AG04449 (cell line): ENCODE measurements at regions of chr6 and their contacts with region 1.

Region 1: GRCh38 chr6:3742426-3743344 is 8.8 kb downstream of the PXDC1 start:
- DNase-seq: no peak
- H3K4me3 ChIP-seq: 0 out of 2 replicates have a peak overlapping the region, but pooled peaks have one; percentile 25
- CTCF ChIP-seq: peak; percentile 87

Region 2: GRCh38 chr6:3281631-3282475 is 460.8 kb before region 1 on chr6:
- CTCF ChIA-PET with region 1: interaction called, 12 read pairs
- POLR2A ChIA-PET with region 1: interaction called, 3 read pairs
- DNase-seq: peak; percentile 37
- H3K4me3 ChIP-seq: no peak overlapping the region
- CTCF ChIP-seq: no peak

Region 3: DNA sequence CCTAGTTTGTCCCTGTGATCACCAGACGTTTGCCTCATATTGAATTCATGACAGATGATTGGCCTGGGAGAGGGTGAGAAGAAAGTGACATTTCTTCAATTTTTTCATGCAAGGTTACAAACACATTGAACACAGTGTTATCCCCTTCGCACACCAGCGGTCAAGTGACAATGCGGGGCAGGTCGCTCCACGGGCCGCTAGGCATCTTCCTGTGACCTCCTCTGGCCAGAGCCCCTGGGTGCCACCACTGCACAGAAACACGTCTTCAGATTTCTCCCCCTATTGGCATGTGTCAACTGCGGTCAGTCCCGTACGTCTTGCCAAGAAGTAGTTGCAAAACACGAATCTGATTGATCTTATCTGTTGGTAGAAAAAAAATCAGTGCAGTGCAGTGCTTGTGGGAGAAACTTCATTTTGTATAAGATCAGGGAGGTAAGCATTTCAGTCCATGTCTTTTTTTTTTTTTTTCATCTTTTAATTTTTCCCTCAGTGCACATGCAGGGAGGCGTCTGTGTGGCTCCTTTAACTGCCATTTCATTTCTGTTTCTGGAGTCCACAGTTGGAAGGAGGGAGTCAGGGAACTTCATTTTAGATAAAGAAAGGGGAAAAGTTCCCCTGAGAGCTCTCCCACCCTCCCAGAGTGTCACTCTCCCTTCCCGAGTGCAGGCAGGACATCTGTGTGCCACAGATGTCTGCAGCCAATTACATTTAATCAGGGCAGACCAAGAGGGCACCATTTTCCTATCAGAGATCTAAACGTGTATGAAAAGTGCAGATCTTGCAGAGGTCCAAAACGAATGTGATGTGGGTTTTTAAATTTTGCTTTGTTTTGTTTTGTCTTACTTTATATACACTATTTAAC is 88.0 kb before region 1 on chr6:
- CTCF ChIA-PET with region 1: no interaction called
- POLR2A ChIA-PET with region 1: no interaction called
- DNase-seq: no peak
- H3K4me3 ChIP-seq: no peak overlapping the region
- CTCF ChIP-seq: no peak

Region 4: DNA sequence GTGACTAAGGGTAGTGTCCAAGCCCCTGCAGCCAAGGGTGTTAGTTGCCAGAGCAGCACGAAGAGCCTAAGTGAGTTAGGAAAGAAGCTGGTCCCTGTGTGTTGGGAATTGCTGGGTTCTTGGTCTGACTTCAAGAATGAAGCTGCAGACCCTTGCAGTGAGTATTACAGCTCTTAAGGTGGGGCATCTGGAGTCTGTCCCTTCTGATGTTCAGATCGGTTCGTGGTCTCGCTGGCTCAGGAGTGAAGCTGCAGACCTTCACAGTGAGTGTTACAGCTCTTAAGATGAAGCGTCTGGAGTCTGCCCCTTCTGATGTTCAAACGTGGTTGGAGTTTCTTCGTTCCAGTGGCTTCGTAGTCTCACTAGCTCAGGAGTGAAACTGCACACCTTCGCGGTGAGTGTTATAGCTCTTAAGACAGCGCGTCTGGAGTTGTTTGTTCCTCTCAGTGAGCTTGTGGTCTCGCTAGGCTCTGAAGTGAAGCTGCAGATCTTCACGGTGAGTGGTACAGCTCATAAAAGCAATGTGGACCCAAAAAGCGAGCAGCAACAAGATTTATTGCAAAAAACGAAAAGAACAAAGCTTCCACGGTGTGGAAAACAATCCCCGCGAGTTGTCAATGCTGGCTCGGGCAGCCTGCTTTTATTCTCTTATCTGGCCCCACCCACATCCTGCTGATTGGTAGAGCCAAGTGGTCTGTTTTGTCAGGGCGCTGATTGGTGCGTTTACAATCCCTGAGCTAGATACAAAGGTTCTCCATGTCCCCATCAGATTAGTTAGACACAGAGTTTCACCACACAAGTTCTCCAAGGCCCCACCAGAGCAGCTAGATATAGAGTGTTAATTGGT is 23.0 kb before region 1 on chr6:
- CTCF ChIA-PET with region 1: no interaction called
- POLR2A ChIA-PET with region 1: no interaction called
- DNase-seq: no peak
- H3K4me3 ChIP-seq: no peak overlapping the region
- CTCF ChIP-seq: no peak

Region 5: GRCh38 chr6:3841711-3842565 is 99.3 kb after region 1 on chr6:
- CTCF ChIA-PET with region 1: interaction called, 77 read pairs
- POLR2A ChIA-PET with region 1: interaction called, 27 read pairs
- DNase-seq: peak; percentile 67
- H3K4me3 ChIP-seq: no peak overlapping the region
- CTCF ChIP-seq: no peak

Region 6: DNA sequence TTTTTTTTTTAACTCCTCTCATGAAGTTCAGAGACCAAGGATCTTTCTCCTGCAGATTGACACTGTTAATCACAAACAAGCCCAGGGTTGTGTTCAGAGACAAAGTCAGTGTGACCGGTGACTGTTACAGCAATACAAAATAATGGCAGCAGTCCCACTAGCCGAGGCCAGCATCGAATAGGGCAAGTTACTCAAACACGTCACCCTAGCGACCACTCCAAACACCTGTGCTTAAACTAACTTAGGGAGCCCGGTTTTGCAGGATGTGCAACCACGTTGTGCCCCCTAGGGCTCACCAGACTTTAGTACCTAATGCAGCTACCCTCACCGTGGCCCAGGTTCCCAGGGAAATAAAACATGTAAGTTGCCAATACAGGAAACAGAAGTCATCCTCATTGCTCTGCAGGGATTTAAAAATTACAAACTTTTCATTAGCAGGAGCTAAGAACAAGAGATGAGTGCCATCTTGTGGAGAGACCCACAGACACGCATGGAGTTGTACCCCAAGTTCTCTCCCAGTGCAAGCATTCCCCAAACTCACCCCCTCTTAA is 144.5 kb after region 1 on chr6:
- CTCF ChIA-PET with region 1: interaction called, 267 read pairs
- POLR2A ChIA-PET with region 1: interaction called, 13 read pairs
- DNase-seq: no peak
- H3K4me3 ChIP-seq: no peak overlapping the region
- CTCF ChIP-seq: peak; percentile 55

Region 7: DNA sequence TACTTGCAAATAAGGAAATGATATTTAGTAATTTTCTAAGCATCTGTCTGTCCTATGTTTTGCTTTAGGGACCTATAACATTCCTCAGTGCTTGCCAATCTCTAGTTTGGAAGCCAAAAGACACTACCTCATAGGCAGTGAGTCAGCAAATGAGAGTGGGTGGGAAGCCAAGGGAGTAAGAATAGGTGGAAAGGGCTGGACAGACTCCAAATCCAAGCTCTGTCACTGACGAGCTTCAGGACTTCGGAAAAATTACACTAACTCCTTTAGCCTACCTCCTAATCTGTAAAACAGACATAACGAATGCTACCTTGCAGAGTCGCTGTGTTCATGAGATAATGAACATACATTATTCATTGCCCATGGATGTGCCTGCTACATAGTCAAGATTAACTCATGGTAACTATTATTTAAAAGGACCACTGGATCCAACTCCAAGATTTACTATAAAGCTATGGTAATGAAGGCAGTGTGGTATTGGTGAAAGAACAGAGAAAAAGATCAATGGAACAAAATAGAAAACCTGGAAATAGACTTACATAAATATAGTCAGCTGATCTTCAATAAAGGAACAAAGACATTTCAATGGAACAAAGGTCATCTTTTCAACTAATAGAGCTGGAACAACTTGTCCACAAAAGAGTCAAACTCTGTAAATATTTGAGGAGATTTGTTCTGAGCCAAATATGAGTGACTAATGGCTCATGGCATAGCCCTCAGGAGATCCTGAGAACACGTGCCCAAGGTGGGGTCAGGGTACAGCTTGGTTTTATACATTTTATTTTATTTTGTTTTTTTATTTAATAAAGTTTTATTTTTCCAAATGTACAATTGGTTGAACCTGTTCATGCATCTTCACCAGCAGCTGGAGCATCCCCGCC is 170.6 kb after region 1 on chr6:
- CTCF ChIA-PET with region 1: interaction called, 12 read pairs
- POLR2A ChIA-PET with region 1: no interaction called
- DNase-seq: peak; percentile 97
- H3K4me3 ChIP-seq: no peak overlapping the region
- CTCF ChIP-seq: no peak

Region 8: GRCh38 chr6:3929281-3929798 is 186.7 kb after region 1 on chr6:
- CTCF ChIA-PET with region 1: interaction called, 38 read pairs
- POLR2A ChIA-PET with region 1: no interaction called
- DNase-seq: peak; percentile 96
- H3K4me3 ChIP-seq: no peak overlapping the region
- CTCF ChIP-seq: no peak

Region 9: GRCh38 chr6:3990692-3991501 is 248.2 kb after region 1 on chr6:
- CTCF ChIA-PET with region 1: interaction called, 18 read pairs
- POLR2A ChIA-PET with region 1: no interaction called
- DNase-seq: peak; percentile 50
- H3K4me3 ChIP-seq: peak overlapping the region; percentile 23
- CTCF ChIP-seq: peak; percentile 94